ENCODE measurements at regions of chr21 and their contacts with region 1.

Region 1: DNA sequence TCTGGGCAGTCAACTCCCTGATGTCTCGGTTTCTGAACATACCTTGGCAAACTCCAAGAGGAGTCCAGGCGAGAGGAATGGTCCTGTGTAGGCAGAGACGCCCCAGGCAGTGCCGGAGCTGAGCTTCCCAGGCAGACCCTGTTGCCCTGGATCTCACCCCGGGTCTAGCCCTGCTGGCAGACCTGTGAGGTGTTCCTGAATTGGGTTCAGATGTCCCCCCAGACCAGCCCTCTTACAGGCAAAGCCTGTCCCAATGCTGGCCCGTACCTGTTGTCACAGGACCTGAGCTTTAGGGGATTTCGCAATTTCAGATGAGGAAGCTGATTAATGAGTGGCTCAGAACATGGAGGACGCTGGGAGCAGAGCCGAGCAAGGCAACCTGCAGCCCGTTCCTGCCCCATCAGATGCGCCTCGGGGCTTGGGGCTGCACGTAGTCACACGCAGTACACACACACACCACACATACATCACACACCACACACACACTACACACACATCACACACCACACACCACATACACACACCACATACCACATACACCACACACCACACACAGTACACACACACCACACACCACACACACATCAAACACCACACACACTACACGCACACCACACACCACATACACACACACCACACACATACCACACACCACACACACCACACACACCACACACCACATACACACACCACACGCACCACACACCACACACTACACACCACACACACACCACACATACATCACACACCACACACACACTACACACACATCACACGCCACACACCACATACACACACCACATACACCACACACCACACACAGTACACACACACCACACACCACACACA is 38.4 kb upstream of the PDE9A start:
- DNase-seq: peak; percentile 55
- H3K4me3 Mint-ChIP-seq: no peak overlapping the region
- H3K27ac Mint-ChIP-seq: no peak overlapping the region
- H3K4me1 Mint-ChIP-seq: no peaks in the 10 kb centered on the region
- H3K27me3 Mint-ChIP-seq: peaks cover 22% of the 10 kb centered on the region

Region 2: GRCh38 chr21:42674351-42674940 is 59.4 kb after region 1 on chr21:
- intact Hi-C with region 1: no loop called
- DNase-seq: no peak
- H3K4me3 Mint-ChIP-seq: no peak overlapping the region
- H3K27ac Mint-ChIP-seq: no peak overlapping the region
- H3K4me1 Mint-ChIP-seq: peaks cover 10% of the 10 kb centered on the region
- H3K27me3 Mint-ChIP-seq: peaks cover 4% of the 10 kb centered on the region

Region 3: GRCh38 chr21:42737951-42738590 is 123.0 kb after region 1 on chr21:
- intact Hi-C with region 1: loop called (anchors 5 kb)
- DNase-seq: no peak
- H3K4me3 Mint-ChIP-seq: peak overlapping the region; percentile 33
- H3K27ac Mint-ChIP-seq: peak overlapping the region; percentile 97
- H3K4me1 Mint-ChIP-seq: peaks cover 49% of the 10 kb centered on the region
- H3K27me3 Mint-ChIP-seq: no peaks in the 10 kb centered on the region

Region 4: GRCh38 chr21:42850866-42851391 is 235.9 kb after region 1 on chr21:
- intact Hi-C with region 1: no loop called
- DNase-seq: no peak
- H3K4me3 Mint-ChIP-seq: no peak overlapping the region
- H3K27ac Mint-ChIP-seq: no peak overlapping the region
- H3K4me1 Mint-ChIP-seq: no peaks in the 10 kb centered on the region
- H3K27me3 Mint-ChIP-seq: no peaks in the 10 kb centered on the region